ENCODE measurements at regions of chr19 and their contacts with region 1.

Region 1: GRCh38 chr19:18985257-18985656 is 44.2 kb upstream of the HOMER3 start:
- DNase-seq: peak; percentile 92
- H3K4me3 ChIP-seq: no peak overlapping the region
- H3K27ac ChIP-seq: peak overlapping the region; percentile 30
- H3K4me1 ChIP-seq: peaks cover 16% of the 10 kb centered on the region
- H3K27me3 ChIP-seq: peaks cover 0 to 8% of the 10 kb centered on the region in 2 experiments
- CTCF ChIP-seq: no peak
- POLR2A ChIP-seq: no peak

Region 2: GRCh38 chr19:18895038-18895823 is 90.0 kb before region 1 on chr19:
- CTCF ChIA-PET with region 1: interaction called, 33 read pairs
- POLR2A ChIA-PET with region 1: no interaction called
- dilution Hi-C with region 1: no loop called
- intact Hi-C with region 1: loop called (anchors 1 kb)
- DNase-seq: peak; percentile 42
- H3K4me3 ChIP-seq: peak overlapping the region; percentile 35 to 54 (median 41)
- H3K27ac ChIP-seq: no peak overlapping the region
- H3K4me1 ChIP-seq: no peaks in the 10 kb centered on the region
- H3K27me3 ChIP-seq: peaks cover 0 to 2% of the 10 kb centered on the region in 2 experiments
- CTCF ChIP-seq: peak; percentile 33 to 54
- POLR2A ChIP-seq: no peak

Region 3: GRCh38 chr19:18940769-18941407 is 44.4 kb before region 1 on chr19 and contains the start of gene HOMER3:
- CTCF ChIA-PET with region 1: interaction called, 35 read pairs
- POLR2A ChIA-PET with region 1: no interaction called
- dilution Hi-C with region 1: no loop called
- intact Hi-C with region 1: loop called (anchors 1 kb)
- DNase-seq: peak; percentile 20
- H3K4me3 ChIP-seq: peak within 1 kb of the TSS; percentile 88 to 99 (median 97)
- H3K27ac ChIP-seq: peak within 1 kb of the TSS; percentile 70
- H3K4me1 ChIP-seq: peaks cover 7% of the 10 kb centered on the region
- H3K27me3 ChIP-seq: no peaks in the 10 kb centered on the region
- CTCF ChIP-seq: no peak
- POLR2A ChIP-seq: no peak
- total RNA-seq, gene HOMER3: 131 and 139 TPM in 2 replicates

Region 4: GRCh38 chr19:18967358-18968146 is 17.7 kb before region 1 on chr19:
- CTCF ChIA-PET with region 1: interaction called, 21 read pairs
- POLR2A ChIA-PET with region 1: no interaction called
- dilution Hi-C with region 1: no loop called
- intact Hi-C with region 1: loop called (anchors 1 kb)
- DNase-seq: peak; percentile 71
- H3K4me3 ChIP-seq: peak overlapping the region in 1 of 3 experiments; percentile 11
- H3K27ac ChIP-seq: peak overlapping the region; percentile 48
- H3K4me1 ChIP-seq: peaks cover 30% of the 10 kb centered on the region
- H3K27me3 ChIP-seq: no peaks in the 10 kb centered on the region
- CTCF ChIP-seq: no peak
- POLR2A ChIP-seq: no peak